ENCODE measurements at regions of chr21 and their contacts with region 1.

Region 1: GRCh38 chr21:43854773-43855633 is 10.0 kb upstream of the AGPAT3 start:
- DNase-seq: peak; percentile 64
- ATAC-seq: peak; percentile 100
- H3K4me3 Mint-ChIP-seq: peak overlapping the region; percentile 82
- H3K27ac Mint-ChIP-seq: peak overlapping the region; percentile 98
- H3K4me1 Mint-ChIP-seq: peaks cover 28% of the 10 kb centered on the region
- H3K27me3 Mint-ChIP-seq: no peaks in the 10 kb centered on the region

Region 2: GRCh38 chr21:43842742-43843141 is 12.3 kb before region 1 on chr21:
- POLR2A ChIA-PET with region 1: interaction called, 14 read pairs
- DNase-seq: no peak
- ATAC-seq: peak; percentile 54
- H3K4me3 Mint-ChIP-seq: peak overlapping the region; percentile 72
- H3K27ac Mint-ChIP-seq: peak overlapping the region; percentile 96
- H3K4me1 Mint-ChIP-seq: peaks cover 10% of the 10 kb centered on the region
- H3K27me3 Mint-ChIP-seq: peaks cover 10% of the 10 kb centered on the region

Region 3: GRCh38 chr21:43893536-43894205 is 38.7 kb after region 1 on chr21:
- POLR2A ChIA-PET with region 1: no interaction called
- DNase-seq: peak; percentile 29
- ATAC-seq: peak; percentile 75
- H3K4me3 Mint-ChIP-seq: peak overlapping the region; percentile 67
- H3K27ac Mint-ChIP-seq: peak overlapping the region; percentile 80
- H3K4me1 Mint-ChIP-seq: peaks cover 32% of the 10 kb centered on the region
- H3K27me3 Mint-ChIP-seq: no peaks in the 10 kb centered on the region